ENCODE measurements at regions of chr2 and their contacts with region 1.

Region 1: GRCh38 chr2:6909431-6910385 is 7.5 kb upstream of the RNF144A start:
- DNase-seq: no peak
- ATAC-seq: no peak
- H3K4me3 ChIP-seq: no peak overlapping the region
- H3K27ac ChIP-seq: no peak overlapping the region
- H3K4me1 ChIP-seq: no peaks in the 10 kb centered on the region
- H3K27me3 ChIP-seq: peaks cover 2% of the 10 kb centered on the region; the same call in 1 of the 2 replicates
- CTCF ChIP-seq: no peak

Region 2: GRCh38 chr2:7037340-7038333 is 127.9 kb after region 1 on chr2:
- CTCF ChIA-PET with region 1: no interaction called
- POLR2A ChIA-PET with region 1: no interaction called
- in situ Hi-C with region 1: no loop called
- intact Hi-C with region 1: no loop called
- DNase-seq: peak; percentile 41
- ATAC-seq: peak; percentile 86
- H3K4me3 ChIP-seq: no peak overlapping the region
- H3K27ac ChIP-seq: no peak overlapping the region
- H3K4me1 ChIP-seq: no peaks in the 10 kb centered on the region
- H3K27me3 ChIP-seq: no peaks in the 10 kb centered on the region
- CTCF ChIP-seq: peak; percentile 82

Region 3: DNA sequence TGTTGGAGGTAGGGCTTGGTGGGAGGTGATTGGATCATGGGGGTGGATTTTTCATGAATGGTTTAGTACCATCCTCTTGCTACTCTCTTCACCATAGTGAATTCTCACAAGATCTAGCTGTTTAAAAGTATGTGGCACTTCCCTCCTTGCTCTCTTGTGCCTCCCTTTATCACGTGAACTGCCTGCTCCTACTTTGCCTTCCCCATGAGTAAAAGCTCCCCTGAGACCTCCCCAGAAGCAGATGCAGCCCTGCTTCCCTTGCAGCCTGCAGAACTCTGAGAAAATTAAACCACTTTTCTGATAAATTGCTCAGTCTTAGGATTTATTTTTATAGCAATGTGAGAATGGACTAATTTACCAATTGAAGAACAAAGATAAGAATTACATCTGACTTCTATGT is 230.6 kb after region 1 on chr2:
- CTCF ChIA-PET with region 1: no interaction called
- POLR2A ChIA-PET with region 1: no interaction called
- in situ Hi-C with region 1: no loop called
- intact Hi-C with region 1: no loop called
- DNase-seq: no peak
- ATAC-seq: no peak
- H3K4me3 ChIP-seq: no peak overlapping the region
- H3K27ac ChIP-seq: no peak overlapping the region
- H3K4me1 ChIP-seq: no peaks in the 10 kb centered on the region
- H3K27me3 ChIP-seq: no peaks in the 10 kb centered on the region
- CTCF ChIP-seq: no peak

Region 4: DNA sequence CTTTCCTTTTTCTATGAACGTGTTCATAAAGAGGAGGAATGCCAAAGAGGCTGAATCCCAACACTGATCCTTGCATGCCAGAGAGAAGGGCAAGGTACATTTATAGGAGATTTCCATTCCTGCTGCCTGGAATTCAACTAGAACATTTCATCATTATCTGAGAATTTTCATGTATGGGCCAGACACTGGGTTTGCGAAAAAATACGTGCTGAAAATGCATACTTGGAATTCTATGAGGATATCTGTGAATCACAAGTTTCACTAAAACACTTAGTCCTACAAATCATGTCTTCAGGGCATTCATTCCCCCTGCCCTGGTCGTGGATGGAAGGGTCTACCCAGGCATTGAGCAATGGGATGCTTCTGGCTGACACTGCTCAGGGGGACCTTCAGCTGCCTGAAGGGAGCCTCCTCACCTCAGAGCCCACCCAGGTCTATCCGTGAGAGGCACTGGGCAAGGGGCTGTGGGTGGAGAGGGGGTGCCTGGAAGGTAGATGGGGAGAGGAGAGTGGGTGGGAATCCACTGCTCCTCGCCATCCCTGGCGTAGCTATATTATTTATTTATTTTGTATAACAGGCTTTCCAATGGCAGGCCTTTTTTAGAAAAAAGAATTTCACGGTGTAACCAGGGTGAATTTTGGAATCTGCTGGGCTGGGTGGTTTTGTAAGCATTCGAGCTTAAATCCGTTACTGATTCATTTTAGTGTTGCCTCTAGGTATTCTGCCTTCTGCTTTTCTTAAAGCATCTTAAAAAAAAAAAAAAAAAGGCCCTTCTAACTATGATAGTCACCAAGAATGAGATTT is 1211.5 kb after region 1 on chr2:
- CTCF ChIA-PET with region 1: no interaction called
- POLR2A ChIA-PET with region 1: interaction called, 12 read pairs
- in situ Hi-C with region 1: no loop called
- intact Hi-C with region 1: no loop called
- DNase-seq: no peak
- ATAC-seq: no peak
- H3K4me3 ChIP-seq: no peak overlapping the region
- H3K27ac ChIP-seq: no peak overlapping the region
- H3K4me1 ChIP-seq: no peaks in the 10 kb centered on the region
- H3K27me3 ChIP-seq: no peaks in the 10 kb centered on the region
- CTCF ChIP-seq: no peak